Endothelial cell of umbilical vein (primary cell): ENCODE measurements at regions of chr12 and their contacts with region 1.

Region 1: DNA sequence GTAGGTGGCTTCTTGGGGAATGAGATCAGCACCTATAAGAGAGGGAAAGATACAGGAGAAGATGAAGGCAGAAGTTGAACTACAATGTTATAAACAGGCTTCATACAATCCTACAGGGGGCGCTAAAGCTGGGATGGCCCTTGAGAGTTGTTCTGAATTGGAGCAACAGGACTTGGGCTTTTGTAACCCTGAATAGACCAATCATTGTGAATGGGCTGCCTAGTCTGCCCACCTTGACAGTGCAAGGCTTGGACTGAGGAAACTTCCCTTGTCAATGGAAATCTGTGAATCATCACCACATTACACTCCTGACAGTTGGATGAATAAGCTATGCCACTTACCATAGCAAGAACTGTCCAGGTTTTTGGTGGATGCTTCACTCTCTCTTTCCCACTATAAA is 306.1 kb downstream of the KCNC2 start:
- DNase-seq: no peak
- H3K4me3 ChIP-seq: no peak overlapping the region
- H3K27ac ChIP-seq: no peak overlapping the region
- H3K4me1 ChIP-seq: no peaks in the 10 kb centered on the region
- H3K27me3 ChIP-seq: peaks cover 0 to 5% of the 10 kb centered on the region in 2 experiments
- CTCF ChIP-seq: peak in 1 of 2 donors; percentile 20
- POLR2A ChIP-seq: no peak

Region 2: GRCh38 chr12:74816398-74817168 is 86.9 kb before region 1 on chr12:
- CTCF ChIA-PET with region 1: no interaction called
- POLR2A ChIA-PET with region 1: no interaction called
- dilution Hi-C with region 1: no loop called
- intact Hi-C with region 1: no loop called
- DNase-seq: no peak
- H3K4me3 ChIP-seq: no peak overlapping the region
- H3K27ac ChIP-seq: no peak overlapping the region
- H3K4me1 ChIP-seq: no peaks in the 10 kb centered on the region
- H3K27me3 ChIP-seq: no peaks in the 10 kb centered on the region
- CTCF ChIP-seq: no peak
- POLR2A ChIP-seq: no peak

Region 3: GRCh38 chr12:74890237-74890599 is 13.3 kb before region 1 on chr12:
- CTCF ChIA-PET with region 1: interaction called, 13 read pairs
- POLR2A ChIA-PET with region 1: no interaction called
- dilution Hi-C with region 1: no loop called
- intact Hi-C with region 1: no loop called
- DNase-seq: peak; percentile 79
- H3K4me3 ChIP-seq: no peak overlapping the region
- H3K27ac ChIP-seq: peak overlapping the region; percentile 36
- H3K4me1 ChIP-seq: peaks cover 22% of the 10 kb centered on the region
- H3K27me3 ChIP-seq: no peaks in the 10 kb centered on the region
- CTCF ChIP-seq: no peak
- POLR2A ChIP-seq: no peak